WTC11 (cell line): ENCODE measurements at regions of chr4 and their contacts with region 1.

Region 1: GRCh38 chr4:25986807-25987206 is 72.8 kb downstream of the SMIM20 start:
- DNase-seq: no peak
- ATAC-seq: no peak
- H3K4me3 Mint-ChIP-seq: no peak overlapping the region
- H3K27ac Mint-ChIP-seq: no peak overlapping the region
- H3K4me1 Mint-ChIP-seq: peaks cover 8% of the 10 kb centered on the region
- H3K27me3 Mint-ChIP-seq: peaks cover 9% of the 10 kb centered on the region; the same call in 1 of the 2 replicates
- CTCF ChIP-seq: no peak

Region 2: DNA sequence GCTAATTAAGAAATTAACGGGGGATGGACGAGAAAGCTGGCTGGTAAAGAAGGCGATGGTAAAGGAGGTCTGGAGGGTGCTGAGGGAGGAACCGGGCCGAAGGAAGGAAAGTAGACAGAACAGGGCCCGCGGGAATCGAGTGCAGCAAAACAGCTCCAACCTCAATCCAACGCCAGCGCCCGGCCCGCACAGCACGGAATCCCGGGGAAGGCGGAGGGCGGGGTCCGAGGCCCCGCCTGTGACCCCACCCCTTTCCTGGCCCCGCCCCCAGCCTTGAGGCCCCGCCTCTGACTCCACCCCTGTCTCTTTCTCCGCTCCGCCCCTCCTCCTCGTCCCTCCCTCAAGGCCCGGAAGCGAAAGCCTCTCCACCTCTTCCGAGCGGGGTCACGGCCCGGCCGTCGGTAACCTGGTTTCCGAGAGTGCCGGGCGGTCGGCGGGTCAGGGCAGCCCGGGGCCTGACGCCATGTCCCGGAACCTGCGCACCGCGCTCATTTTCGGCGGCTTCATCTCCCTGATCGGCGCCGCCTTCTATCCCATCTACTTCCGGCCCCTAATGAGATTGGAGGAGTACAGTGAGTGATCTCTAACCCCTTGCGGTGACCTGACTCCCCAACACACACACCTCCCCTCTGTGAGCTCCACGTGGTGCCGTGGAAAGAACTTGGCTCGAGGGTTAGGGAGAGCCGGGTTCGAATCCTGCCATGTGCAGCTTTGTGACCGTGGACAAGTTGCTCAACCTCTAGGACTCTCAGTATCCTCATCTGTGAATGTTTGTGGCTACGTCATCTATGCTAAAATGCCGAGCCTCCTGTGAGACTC is 72.7 kb before region 1 on chr4 and contains the start of gene SMIM20:
- CTCF ChIA-PET with region 1: interaction called, 10 read pairs
- POLR2A ChIA-PET with region 1: no interaction called
- DNase-seq: peak; percentile 84
- ATAC-seq: peak; percentile 95
- H3K4me3 Mint-ChIP-seq: peak within 1 kb of the TSS; percentile 98
- H3K27ac Mint-ChIP-seq: peak within 1 kb of the TSS; percentile 99
- H3K4me1 Mint-ChIP-seq: peaks cover 19% of the 10 kb centered on the region
- H3K27me3 Mint-ChIP-seq: peaks cover 31% of the 10 kb centered on the region
- CTCF ChIP-seq: no peak
- total RNA-seq, gene SMIM20: 39.4 to 48.5 TPM (median 45.3 TPM) in 3 replicates

Region 3: GRCh38 chr4:25953740-25954139 is 33.1 kb before region 1 on chr4:
- CTCF ChIA-PET with region 1: interaction called, 25 read pairs
- POLR2A ChIA-PET with region 1: no interaction called
- DNase-seq: no peak
- ATAC-seq: peak; percentile 16; the same call in 1 of the 2 replicates
- H3K4me3 Mint-ChIP-seq: no peak overlapping the region
- H3K27ac Mint-ChIP-seq: no peak overlapping the region
- H3K4me1 Mint-ChIP-seq: peaks cover 63% of the 10 kb centered on the region
- H3K27me3 Mint-ChIP-seq: peaks cover 4% of the 10 kb centered on the region; the same call in 1 of the 2 replicates
- CTCF ChIP-seq: no peak

Region 4: GRCh38 chr4:26000274-26000950 is 13.6 kb after region 1 on chr4:
- CTCF ChIA-PET with region 1: interaction called, 16 read pairs
- POLR2A ChIA-PET with region 1: no interaction called
- DNase-seq: no peak
- ATAC-seq: 0 out of 2 replicates have a peak, but pooled peaks have one; percentile 39
- H3K4me3 Mint-ChIP-seq: no peak overlapping the region
- H3K27ac Mint-ChIP-seq: no peak overlapping the region
- H3K4me1 Mint-ChIP-seq: no peaks in the 10 kb centered on the region
- H3K27me3 Mint-ChIP-seq: no peaks in the 10 kb centered on the region; the same call in 1 of the 2 replicates
- CTCF ChIP-seq: no peak